ENCODE measurements at regions of chr22 and their contacts with region 1.

Region 1: DNA sequence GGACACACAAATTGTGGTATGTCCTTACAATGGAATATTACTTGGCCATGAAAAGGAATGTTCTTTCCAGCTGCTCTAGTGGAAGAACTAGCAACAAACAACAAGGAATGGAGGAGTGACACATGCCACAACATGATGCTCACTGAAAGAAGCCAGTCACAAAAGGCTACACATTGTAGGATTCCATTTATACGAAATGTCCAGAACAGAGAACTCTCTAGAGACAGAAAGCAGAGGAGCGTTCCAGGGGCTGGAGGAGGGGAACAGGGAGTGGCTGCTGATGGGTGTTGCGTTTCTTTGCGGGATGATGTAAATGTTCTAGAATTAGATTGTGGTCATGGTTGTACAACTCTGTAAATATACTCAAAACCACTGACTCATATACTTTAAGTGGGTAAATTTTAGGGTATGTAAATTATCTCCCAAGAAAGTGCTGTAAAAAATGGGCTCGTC is 32.4 kb upstream of the PDGFB start:
- DNase-seq: peak in 1 of 2 donors; percentile 55
- ATAC-seq: peak; percentile 79 to 82
- H3K4me3 ChIP-seq: no peak overlapping the region
- H3K27ac ChIP-seq: peak overlapping the region; percentile 73 to 92 (median 81)
- H3K4me1 ChIP-seq: peaks cover 16 to 17% of the 10 kb centered on the region in 2 donors
- H3K27me3 ChIP-seq: no peaks in the 10 kb centered on the region
- CTCF ChIP-seq: no peak
- POLR2A ChIP-seq: no peak

Region 2: GRCh38 chr22:39253435-39254070 is 23.6 kb before region 1 on chr22:
- in situ Hi-C with region 1: no loop called
- intact Hi-C with region 1: loop called (anchors 2 kb)
- DNase-seq: peak; percentile 87 to 94
- ATAC-seq: peak; percentile 81 to 83
- H3K4me3 ChIP-seq: peak overlapping the region; percentile 33 to 49 (median 42)
- H3K27ac ChIP-seq: peak overlapping the region; percentile 97 to 100 (median 99)
- H3K4me1 ChIP-seq: peaks cover 52 to 55% of the 10 kb centered on the region in 2 donors
- H3K27me3 ChIP-seq: no peaks in the 10 kb centered on the region
- CTCF ChIP-seq: no peak
- POLR2A ChIP-seq: peak; percentile 58 to 76

Measured in gastrocnemius medialis (tissue), 4 donors.